ENCODE measurements at regions of chr11 and their contacts with region 1.

Region 1: DNA sequence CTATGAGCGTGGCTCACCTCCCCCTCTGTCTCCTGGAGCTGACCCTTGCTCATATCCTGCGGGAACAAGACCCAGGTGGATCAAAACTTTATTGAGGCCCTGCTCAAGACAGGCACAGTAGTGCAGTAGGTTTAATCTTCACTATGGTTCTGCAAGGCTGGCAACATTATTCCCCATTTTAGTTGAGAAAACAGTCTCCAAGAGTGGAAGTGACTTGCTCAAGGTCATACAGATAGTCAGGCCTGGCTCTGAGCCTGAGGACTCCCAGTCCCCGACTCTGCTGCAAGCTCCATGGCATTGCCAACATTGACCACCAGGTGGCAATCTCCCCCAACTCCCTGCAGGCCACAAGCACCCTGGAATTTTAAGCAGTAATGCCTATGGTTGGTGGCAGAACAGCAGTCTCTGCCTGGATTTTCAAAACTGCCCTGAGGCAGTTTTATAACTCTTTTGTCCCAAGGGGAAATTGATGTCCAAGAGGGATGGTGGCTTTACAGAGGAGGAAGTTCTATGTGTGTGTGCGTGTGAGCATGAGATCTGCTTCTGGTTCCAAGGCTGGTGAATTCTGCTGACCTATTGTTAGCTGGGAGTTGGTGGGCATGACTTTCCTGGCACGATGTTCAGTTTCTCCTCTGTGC is 34.1 kb downstream of the NEU3 start:
- DNase-seq: peak; percentile 64
- H3K4me3 ChIP-seq: no peak overlapping the region
- H3K27ac ChIP-seq: no peak overlapping the region
- H3K4me1 ChIP-seq: no peaks in the 10 kb centered on the region
- H3K27me3 ChIP-seq: no peaks in the 10 kb centered on the region
- CTCF ChIP-seq: peak; percentile 96 to 98

Region 2: DNA sequence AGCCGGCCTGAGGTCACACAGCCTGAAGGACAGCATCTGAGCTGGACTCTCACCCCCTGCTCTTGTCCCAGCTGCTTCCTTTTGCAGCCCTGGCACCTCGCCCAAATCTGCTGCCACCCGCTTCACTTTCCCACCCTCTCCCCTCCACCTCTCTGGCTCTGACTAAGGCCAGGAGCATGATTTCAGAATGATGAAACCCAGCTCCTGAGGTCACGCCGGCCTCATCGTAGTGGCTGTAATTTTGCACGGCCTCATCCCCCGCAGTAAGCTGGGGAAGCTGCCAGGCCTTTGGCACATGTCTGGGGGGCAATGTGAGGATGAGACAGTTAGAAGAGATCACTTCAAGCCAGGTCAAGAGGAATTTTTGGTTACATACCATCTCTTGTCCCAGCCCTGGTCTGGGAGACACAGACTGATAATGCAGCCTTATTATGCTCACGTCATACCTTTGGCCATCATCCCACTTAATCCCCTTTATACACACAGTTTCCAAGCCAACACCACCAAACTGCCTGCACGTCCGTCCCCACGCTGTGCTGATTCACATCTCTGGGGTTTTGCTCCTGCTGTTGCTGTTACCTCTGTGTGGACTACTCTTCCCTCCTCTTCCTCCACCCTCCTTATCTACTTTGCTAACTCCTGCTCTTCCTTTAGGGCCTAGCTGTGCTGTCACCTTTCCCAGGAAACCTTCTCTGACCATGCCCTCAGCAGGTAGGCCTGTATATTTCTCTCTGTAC is 349.8 kb before region 1 on chr11:
- CTCF ChIA-PET with region 1: no interaction called
- dilution Hi-C with region 1: no loop called
- in situ Hi-C with region 1: no loop called
- intact Hi-C with region 1: no loop called
- DNase-seq: peak; percentile 88
- H3K4me3 ChIP-seq: no peak overlapping the region
- H3K27ac ChIP-seq: peak overlapping the region; percentile 77
- H3K4me1 ChIP-seq: peaks cover 21% of the 10 kb centered on the region
- H3K27me3 ChIP-seq: no peaks in the 10 kb centered on the region
- CTCF ChIP-seq: no peak

Region 3: GRCh38 chr11:74909385-74909784 is 113.5 kb before region 1 on chr11:
- CTCF ChIA-PET with region 1: no interaction called
- dilution Hi-C with region 1: loop called (anchors 5 kb)
- in situ Hi-C with region 1: no loop called
- intact Hi-C with region 1: no loop called
- DNase-seq: no peak
- H3K4me3 ChIP-seq: no peak overlapping the region
- H3K27ac ChIP-seq: no peak overlapping the region
- H3K4me1 ChIP-seq: no peaks in the 10 kb centered on the region
- H3K27me3 ChIP-seq: no peaks in the 10 kb centered on the region
- CTCF ChIP-seq: no peak

Region 4: DNA sequence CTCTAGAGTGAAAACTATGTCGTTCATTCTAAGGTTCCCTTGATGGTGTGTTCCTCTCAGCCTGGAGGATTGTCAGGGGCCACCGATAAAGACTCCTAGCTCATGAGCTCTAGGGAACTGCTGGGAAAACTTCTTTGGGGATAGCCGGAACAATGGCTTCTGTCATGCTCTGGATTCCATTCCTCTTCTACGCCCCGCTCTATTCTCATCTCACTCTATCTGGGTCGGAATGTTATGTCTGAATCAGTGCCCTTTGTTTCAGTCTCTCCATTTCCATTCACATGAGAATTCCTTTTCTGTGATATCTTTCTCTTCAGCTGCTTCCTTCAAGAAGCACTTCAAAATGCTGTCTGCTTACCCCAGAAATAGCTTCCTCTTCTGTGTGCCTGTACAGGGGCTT is 111.1 kb after region 1 on chr11:
- CTCF ChIA-PET with region 1: no interaction called
- dilution Hi-C with region 1: loop called (anchors 10 kb)
- in situ Hi-C with region 1: no loop called
- intact Hi-C with region 1: no loop called
- DNase-seq: no peak
- H3K4me3 ChIP-seq: no peak overlapping the region
- H3K27ac ChIP-seq: no peak overlapping the region
- H3K4me1 ChIP-seq: no peaks in the 10 kb centered on the region
- H3K27me3 ChIP-seq: peaks cover 5% of the 10 kb centered on the region
- CTCF ChIP-seq: no peak

Region 5: DNA sequence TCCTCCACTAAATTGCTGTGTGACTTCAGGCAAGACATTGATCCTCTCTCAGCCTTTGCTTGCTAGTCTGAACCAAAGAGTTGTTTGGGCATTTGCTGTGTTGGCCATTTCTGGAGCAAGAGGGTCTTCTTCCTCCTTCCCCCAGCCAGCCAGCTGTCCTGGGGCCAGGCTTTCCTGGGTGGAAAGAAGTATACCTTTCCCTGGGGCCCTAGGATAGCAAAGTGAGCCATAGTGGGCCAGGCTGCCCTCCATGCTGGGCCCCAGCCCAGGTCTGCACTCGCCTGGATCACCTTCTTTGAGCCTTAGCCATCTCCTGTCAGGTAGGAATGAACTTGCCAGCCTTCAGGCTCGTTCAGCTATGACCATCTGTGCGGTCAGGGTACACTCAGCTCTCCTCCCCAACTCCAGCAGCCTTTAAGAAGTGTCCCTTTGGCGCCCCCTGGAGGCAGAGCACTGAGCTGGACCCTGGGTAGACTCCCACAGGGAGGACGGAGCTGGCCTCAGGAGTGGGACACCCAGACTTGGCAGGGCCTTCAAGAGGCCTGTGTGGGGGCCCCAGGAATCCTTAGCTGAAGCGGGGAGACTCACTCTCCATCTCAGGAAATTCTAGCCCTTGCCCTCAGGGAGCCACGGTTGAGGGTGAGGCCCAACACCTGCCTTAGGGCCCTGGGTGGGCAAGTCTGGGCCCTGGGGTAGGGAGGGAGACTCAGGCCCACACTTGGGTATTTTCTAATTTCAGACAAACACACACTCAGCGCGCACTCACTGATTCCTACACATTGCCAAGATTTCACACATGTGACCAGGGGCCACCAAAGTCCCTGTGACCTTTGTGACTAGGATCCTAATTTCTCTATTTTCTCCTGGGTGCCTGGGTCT is 182.0 kb after region 1 on chr11:
- CTCF ChIA-PET with region 1: interaction called, 7 read pairs
- dilution Hi-C with region 1: no loop called
- in situ Hi-C with region 1: no loop called
- intact Hi-C with region 1: loop called (anchors 1 kb)
- DNase-seq: peak; percentile 72
- H3K4me3 ChIP-seq: no peak overlapping the region
- H3K27ac ChIP-seq: no peak overlapping the region
- H3K4me1 ChIP-seq: no peaks in the 10 kb centered on the region
- H3K27me3 ChIP-seq: no peaks in the 10 kb centered on the region
- CTCF ChIP-seq: peak; percentile 85 to 92

Region 6: GRCh38 chr11:75248690-75249268 is 225.9 kb after region 1 on chr11:
- CTCF ChIA-PET with region 1: interaction called, 5 read pairs
- dilution Hi-C with region 1: no loop called
- in situ Hi-C with region 1: loop called (anchors 5 to 10 kb)
- intact Hi-C with region 1: loop called (anchors 1 kb)
- DNase-seq: peak; percentile 70
- H3K4me3 ChIP-seq: no peak overlapping the region
- H3K27ac ChIP-seq: no peak overlapping the region
- H3K4me1 ChIP-seq: no peaks in the 10 kb centered on the region
- H3K27me3 ChIP-seq: no peaks in the 10 kb centered on the region
- CTCF ChIP-seq: peak; percentile 100